ENCODE measurements at regions of chr17 and their contacts with region 1.

Region 1: GRCh38 chr17:50865984-50866774 is at the start of gene TOB1:
- DNase-seq: peak; percentile 96
- ATAC-seq: peak; percentile 81
- H3K4me3 Mint-ChIP-seq: peak within 1 kb of the TSS; percentile 88
- H3K27ac Mint-ChIP-seq: peak within 1 kb of the TSS; percentile 93
- H3K4me1 Mint-ChIP-seq: peaks cover 43% of the 10 kb centered on the region
- H3K27me3 Mint-ChIP-seq: no peaks in the 10 kb centered on the region
- CTCF ChIP-seq: no peak
- total RNA-seq, gene TOB1: 34.4 to 40.5 TPM

Region 2: DNA sequence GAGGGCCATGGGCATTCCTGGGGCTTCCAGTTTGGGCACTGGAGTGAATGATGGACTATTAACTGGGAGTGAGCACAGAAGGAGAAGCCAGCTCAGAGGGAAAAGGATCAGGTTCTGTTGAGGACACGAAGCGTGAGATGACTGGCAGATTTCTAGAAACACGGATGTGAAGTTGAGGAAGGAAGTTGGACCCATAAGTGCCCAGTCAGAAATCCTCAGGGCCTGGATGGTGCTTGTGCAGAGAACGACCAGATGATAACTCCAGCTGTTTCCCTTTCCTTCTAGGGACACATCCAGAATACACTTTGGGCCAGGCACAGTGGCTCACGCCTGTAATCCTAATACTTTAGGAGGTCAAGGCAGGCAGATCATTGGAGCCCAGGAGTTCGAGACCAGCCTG is 75.6 kb before region 1 on chr17:
- CTCF ChIA-PET with region 1: no interaction called
- POLR2A ChIA-PET with region 1: no interaction called
- intact Hi-C with region 1: no loop called
- DNase-seq: no peak
- ATAC-seq: no peak
- H3K4me3 Mint-ChIP-seq: no peak overlapping the region
- H3K27ac Mint-ChIP-seq: no peak overlapping the region
- H3K4me1 Mint-ChIP-seq: peaks cover 3% of the 10 kb centered on the region
- H3K27me3 Mint-ChIP-seq: no peaks in the 10 kb centered on the region
- CTCF ChIP-seq: no peak

Region 3: GRCh38 chr17:50853015-50853615 is 13.1 kb before region 1 on chr17:
- CTCF ChIA-PET with region 1: interaction called, 116 read pairs
- POLR2A ChIA-PET with region 1: interaction called, 52 read pairs
- intact Hi-C with region 1: no loop called
- DNase-seq: no peak
- ATAC-seq: no peak
- H3K4me3 Mint-ChIP-seq: no peak overlapping the region
- H3K27ac Mint-ChIP-seq: no peak overlapping the region
- H3K4me1 Mint-ChIP-seq: peaks cover 13% of the 10 kb centered on the region
- H3K27me3 Mint-ChIP-seq: no peaks in the 10 kb centered on the region
- CTCF ChIP-seq: no peak

Region 4: DNA sequence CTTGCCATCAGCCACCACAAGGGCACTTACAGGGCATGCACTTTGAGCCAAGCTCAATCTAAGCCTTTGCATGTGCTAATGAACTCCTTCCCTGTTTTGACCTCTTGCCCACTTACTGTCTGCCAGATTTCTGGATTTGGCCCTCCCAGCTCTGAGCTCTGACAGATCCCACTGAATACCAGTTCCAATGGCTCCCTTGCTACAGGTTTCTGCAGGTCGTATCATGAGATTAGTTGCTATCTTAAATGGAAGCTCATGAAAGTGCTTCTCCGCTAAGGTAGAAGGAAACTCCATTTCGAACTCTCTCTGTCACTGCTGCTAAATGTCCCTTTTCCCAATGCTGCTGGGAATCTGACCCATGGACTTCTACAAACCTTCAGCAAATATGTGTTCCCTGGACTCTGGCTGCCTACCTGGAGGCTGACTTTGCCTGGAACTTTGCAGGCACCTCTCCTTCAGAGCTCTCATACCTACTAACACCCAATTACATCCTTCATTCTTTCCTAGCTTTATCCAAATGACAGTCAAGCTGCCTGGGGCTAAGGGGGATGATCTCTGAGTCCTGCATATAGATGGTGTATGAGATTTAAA is 23.4 kb after region 1 on chr17:
- CTCF ChIA-PET with region 1: no interaction called
- POLR2A ChIA-PET with region 1: interaction called, 15 read pairs
- intact Hi-C with region 1: no loop called
- DNase-seq: no peak
- ATAC-seq: no peak
- H3K4me3 Mint-ChIP-seq: no peak overlapping the region
- H3K27ac Mint-ChIP-seq: no peak overlapping the region
- H3K4me1 Mint-ChIP-seq: peaks cover 9% of the 10 kb centered on the region
- H3K27me3 Mint-ChIP-seq: no peaks in the 10 kb centered on the region
- CTCF ChIP-seq: no peak

Region 5: DNA sequence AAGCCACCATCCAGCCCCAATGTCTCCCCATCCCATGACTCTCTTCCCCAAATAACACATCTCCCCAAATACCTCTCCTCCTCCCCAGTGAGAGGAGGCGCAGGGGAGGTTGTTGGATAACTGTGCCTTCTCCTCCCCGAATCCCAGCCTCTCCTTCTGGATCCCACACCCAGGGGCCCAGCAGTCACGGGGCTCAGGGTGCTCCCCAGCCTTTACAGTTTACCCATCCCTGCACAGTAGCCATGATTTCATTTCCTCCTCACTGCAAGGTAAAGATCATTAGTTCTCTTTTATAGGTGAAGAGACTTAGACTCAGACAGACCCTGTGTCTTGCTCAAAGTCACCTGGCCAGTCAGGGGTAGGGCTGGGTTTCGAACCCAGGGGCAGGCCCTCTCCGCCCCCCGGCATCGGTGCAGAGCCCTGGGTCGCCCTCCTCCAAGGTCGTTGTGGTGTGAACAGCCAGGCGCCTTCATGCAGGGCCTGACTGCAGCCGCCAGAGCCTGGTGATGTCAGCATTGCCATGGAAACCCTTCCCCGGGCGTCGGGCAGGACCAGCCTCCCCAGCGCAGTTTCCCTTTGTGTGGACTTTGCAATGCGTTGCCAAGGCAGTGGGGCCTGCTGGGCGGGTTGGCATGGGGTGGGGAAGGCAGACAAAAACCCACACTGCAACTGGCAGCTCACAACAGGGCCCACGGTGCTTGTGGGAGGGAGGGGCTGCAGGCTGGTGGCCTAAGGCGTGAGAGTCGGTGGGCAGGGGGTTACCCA is 53.3 kb after region 1 on chr17:
- CTCF ChIA-PET with region 1: interaction called, 3 read pairs
- POLR2A ChIA-PET with region 1: interaction called, 75 read pairs
- intact Hi-C with region 1: loop called (anchors 5 kb)
- DNase-seq: peak; percentile 89
- ATAC-seq: peak; percentile 82
- H3K4me3 Mint-ChIP-seq: peak overlapping the region; percentile 49
- H3K27ac Mint-ChIP-seq: peak overlapping the region; percentile 94
- H3K4me1 Mint-ChIP-seq: peaks cover 47% of the 10 kb centered on the region
- H3K27me3 Mint-ChIP-seq: no peaks in the 10 kb centered on the region
- CTCF ChIP-seq: no peak

Region 6: GRCh38 chr17:50944054-50944901 is 78.1 kb after region 1 on chr17:
- CTCF ChIA-PET with region 1: interaction called, 39 read pairs
- POLR2A ChIA-PET with region 1: interaction called, 100 read pairs
- intact Hi-C with region 1: no loop called
- DNase-seq: peak; percentile 89
- ATAC-seq: peak; percentile 88
- H3K4me3 Mint-ChIP-seq: peak overlapping the region; percentile 79
- H3K27ac Mint-ChIP-seq: peak overlapping the region; percentile 86
- H3K4me1 Mint-ChIP-seq: peaks cover 25% of the 10 kb centered on the region
- H3K27me3 Mint-ChIP-seq: no peaks in the 10 kb centered on the region
- CTCF ChIP-seq: no peak

Region 7: GRCh38 chr17:50956750-50957523 is 90.8 kb after region 1 on chr17:
- CTCF ChIA-PET with region 1: interaction called, 79 read pairs
- POLR2A ChIA-PET with region 1: interaction called, 11 read pairs
- intact Hi-C with region 1: no loop called
- DNase-seq: peak; percentile 76
- ATAC-seq: peak; percentile 94
- H3K4me3 Mint-ChIP-seq: no peak overlapping the region
- H3K27ac Mint-ChIP-seq: no peak overlapping the region
- H3K4me1 Mint-ChIP-seq: peaks cover 2% of the 10 kb centered on the region
- H3K27me3 Mint-ChIP-seq: no peaks in the 10 kb centered on the region
- CTCF ChIP-seq: peak; percentile 79

Measured in activated CD8-positive, alpha-beta T cell treated with anti-CD3 and anti-CD28 coated beads for 36 hours (primary cell).